A549 (cell line): ENCODE measurements at regions of chr5 and their contacts with region 1.

Region 1: DNA sequence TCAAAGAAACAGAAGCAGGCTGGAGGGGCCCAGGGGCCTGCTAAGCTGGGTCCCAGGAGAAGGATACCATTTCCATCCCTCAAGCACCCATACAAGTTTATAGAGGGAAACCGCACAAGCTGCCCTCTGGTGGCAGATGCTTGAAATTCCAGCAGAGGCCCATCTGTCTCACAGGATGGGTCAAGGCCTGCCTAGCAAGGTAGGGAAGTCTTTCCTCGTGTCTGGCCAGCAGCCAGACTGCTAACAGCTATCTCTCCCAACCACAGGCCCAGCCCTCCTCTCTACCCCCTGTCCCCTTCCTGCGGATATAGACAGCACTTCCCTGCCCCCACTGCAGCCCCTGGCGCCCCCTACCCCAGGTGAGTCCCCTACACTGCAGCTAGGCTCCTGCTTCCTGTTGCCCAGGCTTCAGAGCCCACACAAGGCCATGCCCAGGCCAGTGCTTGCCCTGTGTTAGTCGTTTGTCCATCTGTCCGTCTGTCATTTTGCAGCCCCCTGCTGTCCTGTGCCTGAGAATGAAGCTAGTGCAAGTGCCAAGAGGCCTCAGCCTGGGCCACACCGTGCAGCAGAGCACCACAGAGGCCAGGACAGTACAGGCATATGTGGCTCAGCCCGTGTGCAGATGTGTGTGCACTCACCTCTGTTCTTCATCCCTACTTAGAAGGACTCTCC is 26.2 kb downstream of the TCF7 start:
- DNase-seq: peak; percentile 65 to 78
- ATAC-seq: peak; percentile 64 to 87
- H3K4me3 ChIP-seq: no peak overlapping the region
- H3K27ac ChIP-seq: peak overlapping the region in 1 of 2 experiments; percentile 48; a peak in 2 of 6 replicates
- H3K4me1 ChIP-seq: peaks cover 17% of the 10 kb centered on the region
- CTCF ChIP-seq: peak; percentile 81
- EP300 ChIP-seq: no peak
- POLR2A ChIP-seq: no peak
- RAD21 ChIP-seq: peak; percentile 49 to 57; a peak in 4 of 5 replicates

Region 2: GRCh38 chr5:134026521-134027268 is 114.0 kb before region 1 on chr5:
- CTCF ChIA-PET with region 1: interaction called, 22 read pairs
- POLR2A ChIA-PET with region 1: no interaction called
- DNase-seq: peak; percentile 86 to 94
- ATAC-seq: peak; percentile 95 to 97
- H3K4me3 ChIP-seq: no peak overlapping the region
- H3K27ac ChIP-seq: peak overlapping the region in 1 of 2 experiments; percentile 59; a peak in 3 of 6 replicates
- H3K4me1 ChIP-seq: peaks cover 32% of the 10 kb centered on the region
- CTCF ChIP-seq: peak; percentile 55
- EP300 ChIP-seq: no peak
- POLR2A ChIP-seq: no peak
- RAD21 ChIP-seq: peak; percentile 52 to 70

Region 3: DNA sequence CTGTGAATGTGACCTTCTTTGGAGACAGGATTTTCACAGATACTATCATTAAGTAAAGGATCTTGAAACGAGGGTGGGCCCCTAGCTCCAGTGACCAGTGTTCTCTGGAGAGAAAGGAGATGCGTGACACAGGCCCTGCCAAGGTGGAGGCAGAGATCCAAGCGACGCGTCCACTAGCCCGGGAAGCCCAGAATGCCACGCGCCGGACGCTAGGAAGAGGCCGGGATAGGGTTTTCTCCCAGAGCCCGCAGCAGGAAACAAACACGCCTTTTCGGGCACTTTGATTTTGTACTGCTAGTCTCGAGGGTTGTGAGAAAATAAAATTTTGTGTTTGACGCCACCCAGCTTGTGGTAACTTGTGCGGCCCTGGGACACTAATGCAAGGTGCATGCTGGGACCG is 106.3 kb before region 1 on chr5:
- CTCF ChIA-PET with region 1: interaction called, 546 read pairs
- POLR2A ChIA-PET with region 1: interaction called, 10 read pairs
- DNase-seq: no peak
- ATAC-seq: no peak
- H3K4me3 ChIP-seq: no peak overlapping the region
- H3K27ac ChIP-seq: no peak overlapping the region; a peak in 1 of 6 replicates
- H3K4me1 ChIP-seq: peaks cover 17% of the 10 kb centered on the region
- CTCF ChIP-seq: no peak
- EP300 ChIP-seq: no peak
- POLR2A ChIP-seq: no peak
- RAD21 ChIP-seq: no peak

Region 4: DNA sequence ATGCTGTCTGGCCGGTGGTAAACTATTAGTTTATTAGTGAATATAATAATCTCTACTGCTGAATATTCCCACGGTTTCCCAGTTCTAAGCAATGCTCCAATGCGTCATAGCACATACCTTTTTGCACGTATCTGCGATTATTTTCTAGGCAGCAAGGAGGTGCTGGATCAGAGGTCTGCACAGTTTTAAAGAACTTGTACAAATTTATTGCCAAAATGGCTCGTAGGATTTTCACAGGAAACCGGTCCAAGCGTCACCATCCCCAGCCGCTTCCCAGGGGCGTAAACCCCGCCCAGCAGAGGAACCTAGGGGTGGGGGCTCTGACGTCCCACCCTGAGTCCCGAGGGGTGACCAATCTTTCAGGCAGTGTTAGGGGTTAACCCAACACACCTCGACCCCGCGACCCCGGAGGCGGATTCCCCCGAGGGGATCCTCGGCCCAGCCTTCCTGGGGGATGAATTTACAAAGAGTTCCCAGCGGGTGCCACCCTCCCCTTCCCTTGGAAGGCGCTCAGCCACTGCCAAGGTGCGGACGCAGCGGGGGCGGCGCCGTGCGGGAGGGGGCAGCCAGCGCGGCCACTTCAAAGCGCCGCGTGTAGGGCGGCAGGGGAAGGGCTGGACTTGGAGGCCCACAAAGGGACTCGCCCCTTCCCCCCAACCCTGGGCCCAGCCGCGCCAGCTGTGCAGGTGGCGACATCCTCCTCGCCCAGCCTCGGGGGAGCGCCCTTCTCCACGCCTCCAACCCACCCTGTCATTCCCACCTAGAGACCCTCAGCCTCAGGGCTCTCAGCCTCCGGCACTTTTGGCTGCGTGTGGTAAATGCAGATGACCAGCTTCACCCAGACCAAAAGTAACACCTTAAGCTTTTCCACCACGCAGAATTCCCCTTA is 69.7 kb before region 1 on chr5:
- CTCF ChIA-PET with region 1: interaction called, 17 read pairs
- POLR2A ChIA-PET with region 1: no interaction called
- DNase-seq: peak; percentile 59 to 66
- ATAC-seq: peak; percentile 62 to 80
- H3K4me3 ChIP-seq: peak overlapping the region; percentile 54
- H3K27ac ChIP-seq: peak overlapping the region; percentile 64 to 90
- H3K4me1 ChIP-seq: peaks cover 8% of the 10 kb centered on the region; the same call in 2 of the 3 replicates
- CTCF ChIP-seq: peak; percentile 11; the same call in 1 of the 3 replicates
- EP300 ChIP-seq: no peak
- POLR2A ChIP-seq: no peak
- RAD21 ChIP-seq: no peak

Region 5: GRCh38 chr5:134153657-134154056 is 13.0 kb after region 1 on chr5:
- CTCF ChIA-PET with region 1: interaction called, 263 read pairs
- POLR2A ChIA-PET with region 1: interaction called, 6 read pairs
- DNase-seq: no peak
- ATAC-seq: no peak
- H3K4me3 ChIP-seq: no peak overlapping the region
- H3K27ac ChIP-seq: no peak overlapping the region
- H3K4me1 ChIP-seq: no peaks in the 10 kb centered on the region
- CTCF ChIP-seq: no peak
- EP300 ChIP-seq: no peak
- POLR2A ChIP-seq: no peak
- RAD21 ChIP-seq: no peak

Region 6: GRCh38 chr5:134161513-134162395 is 21.1 kb after region 1 on chr5:
- CTCF ChIA-PET with region 1: interaction called, 26 read pairs
- POLR2A ChIA-PET with region 1: no interaction called
- DNase-seq: no peak
- ATAC-seq: no peak
- H3K4me3 ChIP-seq: no peak overlapping the region
- H3K27ac ChIP-seq: no peak overlapping the region
- H3K4me1 ChIP-seq: no peaks in the 10 kb centered on the region
- CTCF ChIP-seq: no peak
- EP300 ChIP-seq: no peak
- POLR2A ChIP-seq: no peak
- RAD21 ChIP-seq: no peak